Common myeloid progenitor, CD34-positive (primary cell): ENCODE measurements at regions of chr12 and their contacts with region 1.

Region 1: DNA sequence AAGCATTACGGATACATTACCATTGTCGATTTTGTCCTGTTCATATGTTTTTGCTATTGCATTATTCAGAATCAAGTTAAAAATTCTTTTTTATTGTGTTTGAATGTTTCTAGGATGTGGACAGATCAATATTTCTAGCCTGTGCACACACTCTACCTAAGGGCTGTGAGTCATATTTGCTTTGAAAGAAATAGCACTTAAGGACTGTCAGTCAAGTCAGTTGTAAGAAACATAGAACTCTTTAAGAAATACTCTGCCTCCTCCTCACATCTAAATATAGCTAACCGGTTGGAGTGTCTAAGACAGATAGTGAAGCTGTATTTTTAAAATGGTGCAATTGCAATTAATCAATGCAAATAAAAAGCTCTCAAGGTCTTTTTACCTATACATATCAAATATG is 17.9 kb upstream of the MGST1 start:
- DNase-seq: no peak
- H3K4me3 ChIP-seq: no peak overlapping the region
- H3K27ac ChIP-seq: no peak overlapping the region
- H3K4me1 ChIP-seq: no peaks in the 10 kb centered on the region
- H3K27me3 ChIP-seq: no peaks in the 10 kb centered on the region

Region 2: DNA sequence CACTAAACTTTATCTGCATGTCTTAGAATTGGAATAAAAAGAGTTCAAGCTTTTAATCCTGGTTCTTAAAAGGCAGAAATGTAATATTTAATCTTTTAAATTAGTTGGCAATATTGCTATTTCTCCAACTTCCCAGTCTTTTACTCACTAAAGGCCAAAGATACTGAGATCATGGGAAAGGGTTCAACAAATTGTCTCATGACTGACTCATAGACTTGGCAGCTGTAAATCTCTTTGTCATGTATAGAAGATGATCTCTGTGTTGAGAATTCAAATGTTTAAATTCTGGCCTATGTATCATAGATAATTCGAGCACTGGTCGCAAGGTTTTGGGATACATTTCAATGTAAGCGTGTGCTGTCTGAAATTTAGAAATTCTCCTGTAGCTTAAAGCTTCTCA is 487.5 kb before region 1 on chr12:
- CTCF ChIA-PET with region 1: no interaction called
- POLR2A ChIA-PET with region 1: no interaction called
- DNase-seq: no peak
- H3K4me3 ChIP-seq: no peak overlapping the region
- H3K27ac ChIP-seq: no peak overlapping the region
- H3K4me1 ChIP-seq: no peaks in the 10 kb centered on the region
- H3K27me3 ChIP-seq: no peaks in the 10 kb centered on the region

Region 3: GRCh38 chr12:16291032-16291431 is 38.5 kb before region 1 on chr12:
- CTCF ChIA-PET with region 1: no interaction called
- POLR2A ChIA-PET with region 1: interaction called, 10 read pairs
- DNase-seq: no peak
- H3K4me3 ChIP-seq: no peak overlapping the region
- H3K27ac ChIP-seq: no peak overlapping the region
- H3K4me1 ChIP-seq: no peaks in the 10 kb centered on the region
- H3K27me3 ChIP-seq: peaks cover 0 to 2% (median 0%) of the 10 kb centered on the region in 5 experiments

Region 4: GRCh38 chr12:16437281-16437861 is 107.8 kb after region 1 on chr12:
- CTCF ChIA-PET with region 1: no interaction called
- POLR2A ChIA-PET with region 1: no interaction called
- DNase-seq: no peak
- H3K4me3 ChIP-seq: no peak overlapping the region
- H3K27ac ChIP-seq: no peak overlapping the region
- H3K4me1 ChIP-seq: no peaks in the 10 kb centered on the region
- H3K27me3 ChIP-seq: peaks cover 0 to 2% (median 0%) of the 10 kb centered on the region in 5 experiments